Dendritic cell treated with granulocyte-macrophage colony-stimulating factor and Interleukin-4, amounts not matched to agents 40 ng/mL and 50 ng/mL, for 4 days (primary cell): ENCODE measurements at regions of chr17 and their contacts with region 1.

Region 1: GRCh38 chr17:50151041-50151936 is 812 bp upstream of the PPP1R9B start:
- H3K4me3 Mint-ChIP-seq: peak overlapping the region; percentile 89
- H3K27ac Mint-ChIP-seq: peak overlapping the region; percentile 80
- H3K4me1 Mint-ChIP-seq: peaks cover 49% of the 10 kb centered on the region
- H3K27me3 Mint-ChIP-seq: no peaks in the 10 kb centered on the region

Region 2: DNA sequence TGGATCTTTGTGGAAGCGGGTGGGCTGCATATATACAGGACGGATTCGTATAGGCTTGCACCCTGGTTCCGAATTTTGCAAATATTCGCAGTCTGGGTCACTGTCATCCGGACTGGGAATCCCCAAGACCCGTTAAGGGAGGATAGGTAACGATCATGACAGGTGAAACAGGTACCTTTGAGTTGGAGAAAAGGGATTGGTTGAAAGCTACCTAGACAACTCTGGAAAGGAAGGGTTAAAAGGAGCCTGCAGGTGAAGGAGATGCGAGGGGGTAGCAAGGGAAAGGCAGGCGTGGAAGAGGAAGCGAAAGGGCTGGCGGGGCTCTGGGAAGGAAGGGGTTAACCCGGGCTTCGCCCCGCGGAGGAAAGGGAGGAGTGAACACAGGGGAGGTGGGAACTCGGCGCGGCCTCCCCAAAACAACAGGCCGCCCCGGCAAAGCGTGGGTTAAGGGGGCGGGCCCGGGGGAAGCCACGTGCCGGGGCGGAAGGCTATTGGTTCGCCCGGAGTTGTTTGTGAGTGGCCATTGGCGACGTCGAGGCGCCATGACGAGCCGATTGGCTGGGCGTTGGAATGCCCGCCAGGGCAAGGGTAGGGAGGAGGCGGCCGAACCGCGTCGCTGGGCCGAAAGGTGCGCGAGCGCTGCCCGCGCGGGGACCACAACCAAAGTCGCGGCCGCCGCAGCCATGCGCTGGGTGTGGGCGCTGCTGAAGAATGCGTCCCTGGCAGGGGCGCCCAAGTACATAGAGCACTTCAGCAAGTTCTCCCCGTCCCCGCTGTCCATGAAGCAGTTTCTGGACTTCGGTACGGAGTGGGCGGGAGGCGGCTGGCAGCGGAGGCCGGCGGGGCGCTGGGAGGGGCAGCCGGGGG is 56.3 kb before region 1 on chr17 and contains the start of gene PDK2:
- intact Hi-C with region 1: loop called (anchors 10 kb)
- H3K4me3 Mint-ChIP-seq: peak within 1 kb of the TSS; percentile 93
- H3K27ac Mint-ChIP-seq: peak within 1 kb of the TSS; percentile 93
- H3K4me1 Mint-ChIP-seq: peaks cover 43% of the 10 kb centered on the region
- H3K27me3 Mint-ChIP-seq: peaks cover 10% of the 10 kb centered on the region

Region 3: DNA sequence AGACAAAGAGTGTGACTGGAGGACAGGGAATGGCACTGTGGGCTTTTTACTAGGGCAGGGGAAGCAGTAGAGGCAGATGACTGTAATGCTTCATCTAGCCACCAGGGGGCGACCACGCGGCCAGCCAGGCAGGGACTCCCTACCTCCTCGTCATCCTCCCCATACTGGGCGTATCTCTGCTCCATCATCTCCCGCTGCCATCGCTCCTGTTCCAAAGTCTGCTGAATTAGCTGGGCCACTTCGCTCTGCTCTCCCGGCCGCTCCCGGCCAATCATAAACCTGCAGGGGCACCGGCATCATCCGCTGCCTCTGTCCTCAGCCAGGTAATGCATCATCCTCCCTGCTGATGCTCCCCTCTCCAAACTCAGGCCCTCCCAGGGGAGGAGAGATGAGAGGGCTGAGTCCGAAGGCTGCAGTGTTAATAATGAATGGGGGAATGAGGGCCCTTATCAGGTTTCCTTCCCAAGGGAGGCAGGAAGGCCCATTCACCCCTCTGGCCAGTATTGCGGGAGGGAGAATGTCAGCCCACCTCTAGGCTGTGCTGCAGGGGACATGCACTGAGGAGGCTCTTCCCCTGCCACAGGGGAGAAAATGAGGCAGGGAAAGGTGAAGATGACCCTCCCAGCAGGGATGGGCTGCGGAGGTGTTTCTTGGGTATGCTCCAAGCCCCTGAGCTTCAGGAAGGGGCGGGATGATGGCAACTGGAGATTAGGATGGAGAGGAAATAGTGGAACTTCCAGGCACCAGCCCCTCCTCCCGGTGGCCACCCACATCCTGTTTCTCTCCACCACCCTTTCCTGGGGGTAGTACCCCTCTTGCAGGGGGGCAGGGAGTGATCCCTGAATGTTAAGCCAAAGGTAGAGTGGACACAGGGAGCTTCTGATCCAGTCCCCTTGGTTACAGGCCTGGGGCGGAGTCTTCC is 11.1 kb before region 1 on chr17:
- intact Hi-C with region 1: loop called (anchors 1 kb)
- H3K4me3 Mint-ChIP-seq: no peak overlapping the region
- H3K27ac Mint-ChIP-seq: peak overlapping the region; percentile 48
- H3K4me1 Mint-ChIP-seq: peaks cover 81% of the 10 kb centered on the region
- H3K27me3 Mint-ChIP-seq: no peaks in the 10 kb centered on the region

Region 4: DNA sequence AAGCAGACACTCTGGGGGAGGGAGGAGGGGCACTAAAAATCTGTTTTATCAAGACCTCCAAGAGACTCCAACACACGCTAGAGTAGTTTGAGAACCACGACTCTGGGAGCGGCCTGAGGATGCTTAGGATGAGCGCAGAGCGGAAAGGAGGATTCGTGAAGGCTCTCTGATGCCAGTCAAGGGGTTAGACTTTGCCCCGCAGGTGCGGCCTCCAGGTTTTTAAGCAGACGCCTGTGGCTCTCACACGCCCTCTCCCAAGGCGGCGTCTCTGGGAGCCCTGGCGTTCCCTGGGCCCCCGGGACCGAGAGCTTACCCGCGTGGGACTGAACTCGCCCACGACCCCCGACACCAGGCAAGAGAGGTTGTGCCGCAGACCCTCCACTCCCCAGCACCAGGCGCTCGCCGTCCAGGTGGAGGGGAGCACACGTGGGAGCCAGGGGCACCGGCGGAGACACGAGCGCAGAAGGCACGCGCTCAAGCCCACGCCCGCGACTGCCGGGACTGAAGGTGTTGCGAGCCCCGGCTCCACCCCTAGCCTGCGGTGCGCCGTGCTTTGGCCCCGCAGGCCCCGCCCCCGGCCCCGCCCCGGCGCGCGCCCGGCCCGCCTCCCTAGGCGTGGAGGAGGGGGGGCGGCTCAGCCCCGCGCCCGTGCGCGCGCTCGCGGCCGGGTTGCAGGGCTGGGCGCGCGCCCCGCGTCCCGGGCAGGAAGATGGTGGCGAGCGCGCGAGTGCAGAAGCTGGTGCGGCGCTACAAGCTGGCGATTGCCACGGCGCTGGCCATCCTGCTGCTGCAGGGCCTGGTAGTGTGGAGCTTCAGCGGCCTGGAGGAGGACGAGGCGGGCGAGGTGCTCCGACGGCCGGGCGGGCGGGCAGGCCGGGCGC is 194.4 kb after region 1 on chr17 and contains the start of gene XYLT2:
- intact Hi-C with region 1: loop called (anchors 5 kb)
- H3K4me3 Mint-ChIP-seq: peak within 1 kb of the TSS; percentile 89
- H3K27ac Mint-ChIP-seq: peak within 1 kb of the TSS; percentile 81
- H3K4me1 Mint-ChIP-seq: peaks cover 35% of the 10 kb centered on the region
- H3K27me3 Mint-ChIP-seq: peaks cover 5% of the 10 kb centered on the region